Left lung (tissue), 14 donors: ENCODE measurements at regions of chr2 and their contacts with region 1.

Region 1: DNA sequence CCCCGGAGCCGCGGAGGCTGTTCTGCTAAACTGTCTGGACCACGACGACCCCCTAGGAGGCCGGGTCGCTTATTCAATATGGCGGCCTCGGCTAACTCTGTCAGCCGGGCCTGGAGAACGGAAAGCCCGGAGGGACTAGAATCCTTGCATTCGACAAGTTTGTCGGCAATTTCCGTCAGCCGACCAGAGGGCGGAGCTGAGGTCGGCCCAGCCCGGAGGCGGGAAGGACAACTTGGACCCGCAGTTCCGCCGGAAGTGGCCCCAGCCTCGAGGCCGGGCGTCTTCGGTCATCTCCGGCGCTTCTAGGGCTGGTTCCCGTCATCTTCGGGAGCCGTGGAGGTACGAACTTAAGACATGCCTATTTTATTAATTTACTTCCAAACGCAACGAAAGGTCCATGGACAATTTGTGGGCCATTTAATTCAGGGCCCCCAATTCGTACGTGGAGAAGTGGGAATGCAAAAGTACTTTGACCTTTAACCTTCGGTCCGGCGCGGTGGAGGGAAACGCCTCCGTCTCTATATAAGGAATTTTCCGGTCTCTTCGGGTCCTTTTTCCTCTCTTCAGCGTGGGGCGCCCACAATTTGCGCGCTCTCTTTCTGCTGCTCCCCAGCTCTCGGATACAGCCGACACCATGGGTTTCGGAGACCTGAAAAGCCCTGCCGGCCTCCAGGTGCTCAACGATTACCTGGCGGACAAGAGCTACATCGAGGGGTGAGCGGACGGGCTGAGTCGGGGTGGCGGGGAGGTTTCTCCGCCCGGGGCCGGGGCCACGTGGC is at the starts of genes EEF1B2 and NDUFS1:
- DNase-seq: peak; percentile 97 to 99 (median 98)
- ATAC-seq: peak; percentile 96
- H3K4me3 ChIP-seq: peak within 1 kb of the TSS; percentile 74 to 90
- H3K27ac ChIP-seq: peak within 1 kb of the TSS; percentile 86 to 95
- H3K4me1 ChIP-seq: peaks cover 11 to 55% of the 10 kb centered on the region in 2 donors
- H3K27me3 ChIP-seq: no peaks in the 10 kb centered on the region
- CTCF ChIP-seq: no peak
- polyA plus RNA-seq, gene EEF1B2: 633 to 801 (median 711) TPM
- polyA plus RNA-seq, gene NDUFS1: 48.5 to 64.3 (median 56.4) TPM

Region 2: GRCh38 chr2:206085742-206086445 is 73.6 kb before region 1 on chr2 and contains the start of gene INO80D:
- intact Hi-C with region 1: loop called in 1 of 2 experiments (anchors 10 kb)
- DNase-seq: peak; percentile 80 to 92 (median 86)
- ATAC-seq: peak; percentile 86
- H3K4me3 ChIP-seq: peak within 1 kb of the TSS; percentile 80 to 87
- H3K27ac ChIP-seq: peak within 1 kb of the TSS; percentile 96 to 99
- H3K4me1 ChIP-seq: peaks cover 15 to 47% of the 10 kb centered on the region in 2 donors
- H3K27me3 ChIP-seq: no peaks in the 10 kb centered on the region
- CTCF ChIP-seq: peak in 1 of 2 donors; percentile 54
- polyA plus RNA-seq, gene INO80D: 9.9 to 13.0 (median 12.0) TPM

Region 3: GRCh38 chr2:206296128-206296527 is 136.6 kb after region 1 on chr2:
- intact Hi-C with region 1: no loop called
- DNase-seq: no peak
- ATAC-seq: no peak
- H3K4me3 ChIP-seq: no peak overlapping the region
- H3K27ac ChIP-seq: no peak overlapping the region
- H3K4me1 ChIP-seq: no peaks in the 10 kb centered on the region
- H3K27me3 ChIP-seq: no peaks in the 10 kb centered on the region
- CTCF ChIP-seq: no peak